Activated T-helper 2 cell treated with anti-CD3 and anti-CD28 coated beads, Interferon-gamma antibody, Interleukin-2, Interleukin-4, amounts not matched to agents 10 μg/mL and 5 μg/mL and 100 μg/mL, durations not matched to agents 14 hours and 24 hours and 36 hours (primary cell): ENCODE measurements at regions of chr5 and their contacts with region 1.

Region 1: GRCh38 chr5:127564002-127564769 is 46.7 kb downstream of the PRRC1 start:
- DNase-seq: no peak
- H3K4me3 Mint-ChIP-seq: no peak overlapping the region
- H3K27ac Mint-ChIP-seq: no peak overlapping the region
- H3K4me1 Mint-ChIP-seq: peaks cover 7% of the 10 kb centered on the region
- H3K27me3 Mint-ChIP-seq: peaks cover 18% of the 10 kb centered on the region

Region 2: DNA sequence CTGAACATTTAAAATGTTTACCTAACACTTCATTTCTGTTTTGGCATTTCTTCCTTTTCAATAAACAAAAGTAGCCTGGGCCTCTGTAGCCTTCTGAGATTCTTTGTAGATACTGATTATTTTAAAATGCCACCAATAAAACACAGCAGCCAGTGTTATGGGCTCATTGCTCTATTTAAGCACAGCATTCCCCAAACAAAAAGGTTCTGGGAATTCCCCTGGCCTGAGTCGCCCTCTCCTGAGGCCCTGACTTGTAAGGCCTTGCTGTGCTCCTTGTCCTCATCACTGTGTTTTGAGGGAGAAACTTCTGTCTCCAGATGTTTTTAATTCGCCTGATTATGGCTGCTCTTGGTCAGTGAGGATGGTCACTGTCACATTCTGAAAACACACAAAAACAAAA is 51.7 kb after region 1 on chr5:
- intact Hi-C with region 1: no loop called
- DNase-seq: no peak
- H3K4me3 Mint-ChIP-seq: no peak overlapping the region
- H3K27ac Mint-ChIP-seq: no peak overlapping the region
- H3K4me1 Mint-ChIP-seq: no peaks in the 10 kb centered on the region
- H3K27me3 Mint-ChIP-seq: no peaks in the 10 kb centered on the region

Region 3: GRCh38 chr5:128674825-128675446 is 1110.8 kb after region 1 on chr5:
- intact Hi-C with region 1: loop called (anchors 10 kb)
- DNase-seq: no peak
- H3K4me3 Mint-ChIP-seq: no peak overlapping the region
- H3K27ac Mint-ChIP-seq: no peak overlapping the region
- H3K4me1 Mint-ChIP-seq: no peaks in the 10 kb centered on the region
- H3K27me3 Mint-ChIP-seq: no peaks in the 10 kb centered on the region